Caco-2 (cell line): ENCODE measurements at regions of chr19 and their contacts with region 1.

Region 1: GRCh38 chr19:48333467-48334384 is 8.4 kb downstream of the EMP3 start:
- DNase-seq: peak; percentile 94 to 95
- H3K4me3 ChIP-seq: peak overlapping the region; percentile 54
- H3K4me3 Mint-ChIP-seq: peak overlapping the region; percentile 80
- H3K27ac Mint-ChIP-seq: peak overlapping the region; percentile 89
- H3K4me1 ChIP-seq: peaks cover 5% of the 10 kb centered on the region
- H3K4me1 Mint-ChIP-seq: peaks cover 25% of the 10 kb centered on the region
- H3K27me3 ChIP-seq: no peaks in the 10 kb centered on the region
- H3K27me3 Mint-ChIP-seq: no peaks in the 10 kb centered on the region
- CTCF ChIP-seq: peak; percentile 82 to 95

Region 2: GRCh38 chr19:48271531-48272151 is 62.1 kb before region 1 on chr19:
- CTCF ChIA-PET with region 1: interaction called, 16 read pairs
- POLR2A ChIA-PET with region 1: interaction called, 5 read pairs
- intact Hi-C with region 1: loop called (anchors 1 kb)
- DNase-seq: peak; percentile 61 to 67
- H3K4me3 ChIP-seq: peak overlapping the region; percentile 66
- H3K4me3 Mint-ChIP-seq: peak overlapping the region; percentile 78
- H3K27ac Mint-ChIP-seq: peak overlapping the region; percentile 86
- H3K4me1 ChIP-seq: peaks cover 9% of the 10 kb centered on the region
- H3K4me1 Mint-ChIP-seq: peaks cover 25% of the 10 kb centered on the region
- H3K27me3 ChIP-seq: no peaks in the 10 kb centered on the region
- H3K27me3 Mint-ChIP-seq: no peaks in the 10 kb centered on the region
- CTCF ChIP-seq: no peak

Region 3: DNA sequence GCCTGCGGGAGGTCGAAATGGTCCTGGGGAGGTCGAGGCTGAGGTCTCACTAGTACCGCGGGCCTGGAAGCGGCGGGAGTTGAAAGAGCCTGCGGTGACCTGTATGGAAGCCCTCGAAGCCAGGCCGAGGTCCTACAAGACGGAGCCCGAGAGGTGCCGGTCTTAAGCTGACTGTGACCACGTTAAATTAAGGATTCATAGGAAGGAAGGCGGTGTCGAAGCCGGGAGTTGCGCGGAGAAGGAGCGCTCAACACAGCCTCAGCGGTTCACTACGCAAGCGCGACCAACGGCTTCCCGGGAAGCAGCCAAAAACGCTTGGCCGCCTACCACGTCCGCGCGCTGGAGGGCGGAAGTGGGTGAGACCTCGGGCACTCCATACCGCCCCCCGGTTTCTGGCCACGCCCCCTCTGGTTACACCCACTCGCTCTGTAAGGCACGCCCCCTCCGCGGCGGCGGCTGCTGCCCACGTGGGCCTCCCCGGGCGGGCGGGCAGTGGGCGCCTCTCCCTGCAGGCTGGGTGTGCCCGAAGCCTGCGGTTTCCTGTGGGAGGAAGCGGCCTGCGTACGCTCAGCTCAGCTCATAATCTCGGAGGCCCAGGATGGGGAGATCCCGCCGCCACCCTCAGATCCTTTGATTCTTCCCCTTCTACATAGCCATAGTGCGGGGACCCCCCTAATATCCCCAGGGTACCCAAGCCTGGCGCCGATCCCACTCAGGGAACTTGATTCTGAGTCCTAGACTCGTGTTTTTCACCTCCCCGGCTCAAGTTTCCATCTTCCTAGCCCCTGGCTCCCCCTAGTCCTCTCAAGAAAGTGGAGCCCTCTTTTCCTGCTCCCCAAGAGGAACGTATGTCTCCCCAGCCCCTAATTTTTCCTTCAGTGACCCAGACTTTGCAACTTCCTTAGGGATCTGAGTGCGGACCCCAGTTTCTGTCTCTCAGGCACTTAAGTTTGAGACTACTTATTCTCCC is 11.8 kb before region 1 on chr19:
- CTCF ChIA-PET with region 1: interaction called, 76 read pairs
- POLR2A ChIA-PET with region 1: interaction called, 6 read pairs
- intact Hi-C with region 1: loop called (anchors 1 kb)
- DNase-seq: peak; percentile 98 to 99
- H3K4me3 ChIP-seq: peak overlapping the region; percentile 93
- H3K4me3 Mint-ChIP-seq: peak overlapping the region; percentile 96
- H3K27ac Mint-ChIP-seq: peak overlapping the region; percentile 95
- H3K4me1 ChIP-seq: peaks cover 25% of the 10 kb centered on the region
- H3K4me1 Mint-ChIP-seq: peaks cover 34% of the 10 kb centered on the region
- H3K27me3 ChIP-seq: no peaks in the 10 kb centered on the region
- H3K27me3 Mint-ChIP-seq: no peaks in the 10 kb centered on the region
- CTCF ChIP-seq: peak in 1 of 2 experiments; percentile 15

Region 4: DNA sequence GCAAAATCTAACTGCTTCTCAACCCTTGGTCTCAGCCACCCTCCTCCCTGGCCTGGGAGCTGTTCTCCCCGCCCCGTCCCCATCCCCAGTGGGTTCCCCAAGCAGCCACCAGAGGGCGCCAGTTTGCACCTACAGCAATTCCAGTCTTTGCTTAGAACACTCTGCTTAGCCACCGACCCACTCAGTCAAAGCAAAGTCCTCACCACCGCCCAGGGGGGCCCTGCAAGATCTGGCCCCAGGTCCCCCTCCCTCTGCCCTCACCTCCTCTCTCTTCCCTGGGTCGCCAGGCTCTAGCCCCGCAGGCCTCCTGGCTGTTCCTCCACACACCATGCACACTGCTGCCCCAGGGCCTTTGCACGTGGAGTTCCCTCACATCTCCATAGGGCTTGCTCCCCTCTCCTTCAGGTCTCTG is 17.6 kb after region 1 on chr19:
- CTCF ChIA-PET with region 1: interaction called, 14 read pairs
- POLR2A ChIA-PET with region 1: interaction called, 8 read pairs
- intact Hi-C with region 1: no loop called
- DNase-seq: peak; percentile 81 to 85
- H3K4me3 ChIP-seq: no peak overlapping the region
- H3K4me3 Mint-ChIP-seq: no peak overlapping the region
- H3K27ac Mint-ChIP-seq: peak overlapping the region; percentile 43
- H3K4me1 ChIP-seq: peaks cover 33% of the 10 kb centered on the region
- H3K4me1 Mint-ChIP-seq: peaks cover 39% of the 10 kb centered on the region
- H3K27me3 ChIP-seq: no peaks in the 10 kb centered on the region
- H3K27me3 Mint-ChIP-seq: no peaks in the 10 kb centered on the region
- CTCF ChIP-seq: peak; percentile 82 to 90

Region 5: DNA sequence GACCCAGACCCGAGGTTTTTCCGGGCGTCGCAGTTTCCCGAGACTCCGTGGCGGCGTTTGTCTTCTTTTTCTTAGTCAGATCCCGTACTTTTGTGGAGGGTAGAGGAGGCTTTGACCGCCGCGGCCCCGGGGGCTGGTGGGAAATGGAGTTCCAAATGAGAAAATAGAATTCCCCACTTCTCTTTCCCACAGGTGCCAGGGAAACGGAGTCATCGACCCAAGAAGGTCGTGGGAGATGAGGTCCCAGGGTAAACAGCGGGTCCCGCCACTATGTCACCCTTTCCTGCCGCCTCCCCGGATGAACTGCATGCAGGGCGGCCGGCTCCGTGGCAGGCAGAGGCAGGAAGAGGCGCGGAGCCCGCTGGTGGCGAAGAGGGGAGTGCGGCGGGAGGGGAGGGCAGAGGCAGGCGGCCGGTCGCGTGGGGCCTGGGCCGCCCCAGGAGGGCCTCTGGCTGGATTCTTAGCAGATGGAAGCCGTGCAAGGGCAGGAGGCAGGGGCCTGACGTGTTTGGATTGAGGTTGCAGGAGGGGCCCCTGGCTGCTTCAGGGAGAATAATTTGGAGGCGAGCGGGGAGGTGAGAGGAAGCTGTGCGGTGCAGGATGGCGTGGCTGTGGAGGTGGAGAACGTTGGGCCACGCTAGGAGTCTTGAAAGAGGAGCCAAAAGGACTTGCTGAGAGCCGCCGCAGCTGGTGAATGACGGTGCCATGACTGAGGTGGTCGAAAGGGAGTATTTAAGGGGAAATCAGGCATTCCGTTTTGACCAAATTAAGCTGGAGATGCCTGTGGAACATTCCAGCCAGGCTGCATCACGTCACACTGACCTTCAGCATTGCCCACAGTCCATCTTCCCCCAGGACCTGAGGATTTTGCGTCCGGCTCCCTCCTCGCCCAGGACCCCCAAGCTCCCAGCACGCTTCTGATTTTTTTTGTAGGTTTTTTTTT is 147.1 kb after region 1 on chr19:
- CTCF ChIA-PET with region 1: no interaction called
- POLR2A ChIA-PET with region 1: no interaction called
- intact Hi-C with region 1: no loop called
- DNase-seq: no peak
- H3K4me3 ChIP-seq: no peak overlapping the region
- H3K4me3 Mint-ChIP-seq: peak overlapping the region; percentile 64
- H3K27ac Mint-ChIP-seq: peak overlapping the region; percentile 38
- H3K4me1 ChIP-seq: no peaks in the 10 kb centered on the region
- H3K4me1 Mint-ChIP-seq: peaks cover 6% of the 10 kb centered on the region
- H3K27me3 ChIP-seq: no peaks in the 10 kb centered on the region
- H3K27me3 Mint-ChIP-seq: no peaks in the 10 kb centered on the region
- CTCF ChIP-seq: no peak

Region 6: DNA sequence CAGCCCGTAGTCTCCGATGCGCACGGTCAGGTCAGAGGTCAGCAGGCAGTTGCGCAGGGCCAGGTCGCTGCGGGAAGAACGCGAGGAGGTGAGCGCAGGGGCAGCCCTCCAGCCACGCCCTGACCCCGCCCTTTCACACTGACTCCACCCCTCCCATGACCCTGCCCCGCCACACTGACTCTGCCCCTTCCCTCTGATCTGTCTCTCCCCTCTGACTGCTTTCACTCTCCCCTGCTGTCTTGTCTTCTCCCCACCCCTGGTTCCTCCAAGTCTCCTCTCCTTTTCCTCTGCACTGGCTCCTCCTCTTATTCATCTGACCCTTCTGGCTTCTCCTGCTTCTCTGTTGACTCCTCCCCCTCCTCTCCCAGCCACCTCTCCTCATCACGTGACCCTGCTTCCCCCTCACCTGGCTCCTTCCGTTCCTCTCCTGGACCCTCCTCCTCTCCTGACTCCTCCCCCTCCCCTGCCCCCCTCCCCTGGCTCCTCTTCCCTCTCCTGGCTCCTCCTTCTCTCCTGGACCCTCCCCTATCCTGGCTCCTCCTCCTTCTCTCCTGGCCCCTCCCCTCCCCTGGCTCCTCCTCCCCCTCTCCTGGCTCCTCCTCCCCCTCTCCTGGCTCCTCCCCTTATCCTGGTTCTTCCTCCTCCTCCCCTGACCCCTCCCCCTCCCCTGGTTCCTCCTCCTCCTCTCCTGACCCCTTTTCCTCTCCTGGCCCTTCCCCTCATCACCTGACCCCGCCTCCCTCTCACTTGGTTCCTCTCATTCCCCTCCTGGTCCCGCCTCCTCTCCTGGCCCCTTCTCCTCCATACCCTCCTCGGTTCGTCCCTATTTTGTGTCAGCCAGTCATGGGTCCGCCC is 168.0 kb after region 1 on chr19:
- CTCF ChIA-PET with region 1: interaction called, 10 read pairs
- POLR2A ChIA-PET with region 1: no interaction called
- intact Hi-C with region 1: loop called (anchors 5 kb)
- DNase-seq: peak; percentile 99 to 100
- H3K4me3 ChIP-seq: peak overlapping the region; percentile 57
- H3K4me3 Mint-ChIP-seq: peak overlapping the region; percentile 80
- H3K27ac Mint-ChIP-seq: peak overlapping the region; percentile 87
- H3K4me1 ChIP-seq: peaks cover 15% of the 10 kb centered on the region
- H3K4me1 Mint-ChIP-seq: peaks cover 22% of the 10 kb centered on the region
- H3K27me3 ChIP-seq: no peaks in the 10 kb centered on the region
- H3K27me3 Mint-ChIP-seq: no peaks in the 10 kb centered on the region
- CTCF ChIP-seq: no peak

Region 7: GRCh38 chr19:48588670-48589399 is 255.1 kb after region 1 on chr19:
- CTCF ChIA-PET with region 1: interaction called, 21 read pairs
- POLR2A ChIA-PET with region 1: no interaction called
- intact Hi-C with region 1: loop called (anchors 5 kb)
- DNase-seq: peak; percentile 89 to 93
- H3K4me3 ChIP-seq: peak overlapping the region; percentile 27
- H3K4me3 Mint-ChIP-seq: peak overlapping the region; percentile 79
- H3K27ac Mint-ChIP-seq: peak overlapping the region; percentile 74
- H3K4me1 ChIP-seq: peaks cover 3% of the 10 kb centered on the region
- H3K4me1 Mint-ChIP-seq: peaks cover 14% of the 10 kb centered on the region
- H3K27me3 ChIP-seq: no peaks in the 10 kb centered on the region
- H3K27me3 Mint-ChIP-seq: no peaks in the 10 kb centered on the region
- CTCF ChIP-seq: peak; percentile 95 to 97